ENCODE measurements at regions of chr18 and their contacts with region 1.

Region 1: DNA sequence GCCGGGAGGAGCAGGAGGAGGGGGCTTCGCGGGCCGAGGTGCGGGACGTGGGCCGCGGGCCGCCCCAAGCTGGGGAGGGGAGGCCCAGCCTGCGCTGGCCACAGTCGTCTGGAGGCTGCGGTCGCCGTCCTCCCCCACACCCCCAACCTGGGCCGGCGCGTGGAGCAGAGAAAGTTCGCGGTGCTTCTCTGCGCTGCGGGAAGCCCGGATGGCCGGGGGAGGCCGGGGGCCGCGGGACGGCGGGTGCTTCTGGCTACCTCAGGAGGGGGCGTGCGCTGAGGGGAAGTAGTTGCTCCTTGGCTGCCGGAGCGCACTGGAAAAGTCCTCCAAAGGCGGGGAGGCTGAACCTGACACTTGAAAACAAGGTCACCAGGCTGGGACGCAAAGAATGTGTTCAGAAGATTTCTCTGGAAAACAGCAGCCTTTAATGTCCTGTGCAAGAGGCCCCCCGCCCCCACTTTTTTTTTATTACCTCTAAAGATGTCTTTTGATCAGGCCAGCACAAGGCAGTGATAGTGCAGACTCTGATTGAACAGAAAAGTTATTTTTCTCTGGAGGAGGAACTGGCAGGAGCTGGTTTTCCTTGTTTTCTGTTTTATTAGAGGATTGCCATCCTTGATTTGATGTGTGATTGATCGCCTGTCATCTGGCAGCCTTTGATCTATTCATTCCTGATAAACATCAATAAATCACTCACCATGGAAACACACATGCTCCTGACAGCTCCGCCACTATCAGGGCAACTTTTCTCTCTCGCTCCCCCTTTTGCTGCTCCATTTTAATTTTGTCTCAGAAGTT is 1.6 kb downstream of the TSHZ1 start:
- DNase-seq: peak in 4 of 5 donors; percentile 21 to 54 (median 30)
- H3K4me3 ChIP-seq: peak overlapping the region; percentile 54
- H3K4me3 Mint-ChIP-seq: peak overlapping the region; percentile 81 to 97 (median 92)
- H3K27ac ChIP-seq: peak overlapping the region; percentile 7
- H3K27ac Mint-ChIP-seq: peak overlapping the region; percentile 68 to 93 (median 80)
- H3K4me1 ChIP-seq: peaks cover 57% of the 10 kb centered on the region
- H3K4me1 Mint-ChIP-seq: peaks cover 62 to 74% (median 72%) of the 10 kb centered on the region in 3 donors
- H3K27me3 ChIP-seq: no peaks in the 10 kb centered on the region
- H3K27me3 Mint-ChIP-seq: peaks cover 0 to 5% of the 10 kb centered on the region in 2 donors

Region 2: GRCh38 chr18:75293591-75293990 is 81.4 kb after region 1 on chr18:
- CTCF ChIA-PET with region 1: no interaction called
- POLR2A ChIA-PET with region 1: interaction called, 10 read pairs
- DNase-seq: no peak
- H3K4me3 ChIP-seq: no peak overlapping the region
- H3K4me3 Mint-ChIP-seq: no peak overlapping the region
- H3K27ac ChIP-seq: no peak overlapping the region
- H3K27ac Mint-ChIP-seq: peak overlapping the region in 2 of 8 donors; percentile 13 to 73
- H3K4me1 ChIP-seq: no peaks in the 10 kb centered on the region
- H3K4me1 Mint-ChIP-seq: peaks cover 0 to 3% (median 2%) of the 10 kb centered on the region in 3 donors
- H3K27me3 ChIP-seq: no peaks in the 10 kb centered on the region
- H3K27me3 Mint-ChIP-seq: peaks cover 0 to 2% of the 10 kb centered on the region in 2 donors